ENCODE measurements at regions of chr2 and their contacts with region 1.

Region 1: DNA sequence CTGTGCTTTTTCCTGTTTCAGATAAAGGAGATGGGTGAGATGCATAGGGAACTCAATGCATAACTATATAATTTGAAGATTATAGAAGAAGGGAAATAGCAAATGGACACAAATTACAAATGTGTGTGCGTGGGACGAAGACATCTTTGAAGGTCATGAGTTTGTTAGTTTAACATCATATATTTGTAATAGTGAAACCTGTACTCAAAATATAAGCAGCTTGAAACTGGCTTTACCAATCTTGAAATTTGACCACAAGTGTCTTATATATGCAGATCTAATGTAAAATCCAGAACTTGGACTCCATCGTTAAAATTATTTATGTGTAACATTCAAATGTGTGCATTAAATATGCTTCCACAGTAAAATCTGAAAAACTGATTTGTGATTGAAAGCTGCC is 16.4 kb upstream of the MSH2 start:
- H3K4me3 ChIP-seq: no peak overlapping the region
- H3K27ac ChIP-seq: no peak overlapping the region
- H3K4me1 ChIP-seq: no peaks in the 10 kb centered on the region
- CTCF ChIP-seq: no peak

Region 2: DNA sequence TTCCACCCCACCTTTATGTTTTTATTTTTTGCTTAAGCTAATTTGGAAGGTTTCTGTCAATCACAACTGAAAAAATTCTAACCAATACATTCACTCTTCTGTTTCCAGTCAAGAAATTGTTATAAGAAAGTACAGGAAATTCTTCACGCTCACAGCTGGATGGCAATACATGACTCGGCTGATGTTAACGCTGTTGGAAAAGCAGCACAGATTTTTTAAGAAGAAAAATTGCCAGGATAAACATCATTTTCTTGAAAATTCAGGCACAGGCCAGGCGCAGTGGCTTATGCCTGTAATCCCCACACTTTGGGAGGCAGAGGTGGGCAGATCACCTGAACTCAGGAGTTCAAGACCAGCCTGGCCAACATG is 277.6 kb before region 1 on chr2:
- CTCF ChIA-PET with region 1: no interaction called
- POLR2A ChIA-PET with region 1: no interaction called
- H3K4me3 ChIP-seq: no peak overlapping the region
- H3K27ac ChIP-seq: no peak overlapping the region
- H3K4me1 ChIP-seq: no peaks in the 10 kb centered on the region
- CTCF ChIP-seq: no peak

Region 3: GRCh38 chr2:47336259-47337238 is 50.0 kb before region 1 on chr2:
- CTCF ChIA-PET with region 1: interaction called, 91 read pairs
- POLR2A ChIA-PET with region 1: interaction called, 13 read pairs
- H3K4me3 ChIP-seq: no peak overlapping the region
- H3K27ac ChIP-seq: no peak overlapping the region
- H3K4me1 ChIP-seq: no peaks in the 10 kb centered on the region
- CTCF ChIP-seq: no peak

Region 4: DNA sequence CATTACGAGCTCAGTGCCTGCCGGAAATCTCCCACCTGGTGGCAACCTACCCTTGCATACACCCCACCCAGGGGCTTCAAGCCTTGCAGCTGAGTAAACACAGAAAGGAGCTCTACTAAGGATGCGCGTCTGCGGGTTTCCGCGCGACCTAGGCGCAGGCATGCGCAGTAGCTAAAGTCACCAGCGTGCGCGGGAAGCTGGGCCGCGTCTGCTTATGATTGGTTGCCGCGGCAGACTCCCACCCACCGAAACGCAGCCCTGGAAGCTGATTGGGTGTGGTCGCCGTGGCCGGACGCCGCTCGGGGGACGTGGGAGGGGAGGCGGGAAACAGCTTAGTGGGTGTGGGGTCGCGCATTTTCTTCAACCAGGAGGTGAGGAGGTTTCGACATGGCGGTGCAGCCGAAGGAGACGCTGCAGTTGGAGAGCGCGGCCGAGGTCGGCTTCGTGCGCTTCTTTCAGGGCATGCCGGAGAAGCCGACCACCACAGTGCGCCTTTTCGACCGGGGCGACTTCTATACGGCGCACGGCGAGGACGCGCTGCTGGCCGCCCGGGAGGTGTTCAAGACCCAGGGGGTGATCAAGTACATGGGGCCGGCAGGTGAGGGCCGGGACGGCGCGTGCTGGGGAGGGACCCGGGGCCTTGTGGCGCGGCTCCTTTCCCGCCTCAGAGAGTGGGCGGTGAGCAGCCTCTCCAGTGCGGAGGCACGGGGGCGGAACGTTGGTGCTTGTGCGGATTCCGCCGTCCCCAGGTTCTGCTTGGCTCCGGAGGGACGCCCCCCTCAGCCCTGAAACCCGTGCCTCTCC is 16.5 kb after region 1 on chr2 and contains the start of gene MSH2:
- CTCF ChIA-PET with region 1: interaction called, 11 read pairs
- POLR2A ChIA-PET with region 1: interaction called, 6 read pairs
- H3K4me3 ChIP-seq: peak within 1 kb of the TSS; percentile 86
- H3K27ac ChIP-seq: peak within 1 kb of the TSS; percentile 85
- H3K4me1 ChIP-seq: peaks cover 5% of the 10 kb centered on the region; the same call in 1 of the 2 replicates
- CTCF ChIP-seq: peak; percentile 51